Activated CD8-positive, alpha-beta memory T cell treated with anti-CD3 and anti-CD28 coated beads, Interleukin-2, amount 10 ng/mL, durations not matched to agents 7 days and 5 days (primary cell): ENCODE measurements at regions of chr20 and their contacts with region 1.

Region 1: GRCh38 chr20:38748097-38748860 is at the start of gene ACTR5:
- DNase-seq: peak; percentile 97
- ATAC-seq: peak; percentile 91
- H3K4me3 Mint-ChIP-seq: peak within 1 kb of the TSS; percentile 91
- H3K27ac Mint-ChIP-seq: peak within 1 kb of the TSS; percentile 93
- H3K4me1 Mint-ChIP-seq: peaks cover 26% of the 10 kb centered on the region
- H3K27me3 Mint-ChIP-seq: peaks cover 7% of the 10 kb centered on the region
- total RNA-seq, gene ACTR5: 9.5 to 10.6 TPM

Region 2: GRCh38 chr20:38633577-38634093 is 114.6 kb before region 1 on chr20:
- CTCF ChIA-PET with region 1: interaction called, 15 read pairs
- DNase-seq: peak; percentile 68
- ATAC-seq: peak; percentile 89
- H3K4me3 Mint-ChIP-seq: no peak overlapping the region
- H3K27ac Mint-ChIP-seq: no peak overlapping the region
- H3K4me1 Mint-ChIP-seq: peaks cover 3% of the 10 kb centered on the region
- H3K27me3 Mint-ChIP-seq: peaks cover 13% of the 10 kb centered on the region

Region 3: DNA sequence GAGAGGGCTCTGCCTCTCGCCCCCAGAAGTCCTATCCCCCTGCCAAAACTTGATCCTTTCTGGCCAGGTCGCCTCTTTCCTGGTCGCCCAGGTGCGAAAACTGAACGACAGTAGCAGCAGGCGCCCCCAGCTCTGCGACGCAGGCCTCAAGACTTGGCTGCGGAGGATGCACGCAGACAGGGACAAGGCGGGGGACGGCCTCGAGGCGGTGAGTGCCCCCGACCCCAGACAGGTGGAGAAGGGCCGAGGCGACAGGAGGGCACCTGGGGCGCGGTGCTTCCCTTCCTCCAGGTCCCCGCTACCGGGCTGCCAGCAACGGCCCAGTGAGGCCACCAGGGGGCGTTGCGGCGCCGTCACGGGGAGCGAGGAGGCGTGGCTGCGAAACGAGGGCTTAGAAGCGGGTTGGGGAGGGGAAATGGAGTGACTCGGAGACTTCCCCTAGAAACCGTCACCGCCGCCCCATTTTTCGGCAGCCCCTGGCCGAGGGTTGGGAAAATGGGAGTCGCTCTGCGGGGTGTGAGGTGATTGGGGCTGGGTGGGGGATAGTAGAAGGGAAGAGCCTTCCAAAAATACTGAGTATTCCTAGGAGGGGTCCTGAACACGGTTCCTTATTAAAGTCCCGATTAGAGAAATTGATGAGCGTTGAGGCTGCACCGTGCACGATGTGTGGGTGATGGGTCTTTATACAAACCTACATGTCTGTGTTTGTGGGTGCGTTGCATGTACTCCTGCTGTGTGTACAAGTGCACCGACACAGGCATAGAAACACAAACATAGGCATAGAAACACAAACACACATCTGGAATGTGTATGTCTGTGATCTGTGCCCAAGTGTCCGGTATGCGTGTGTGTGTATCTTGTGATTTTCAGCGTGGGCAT is 102.1 kb before region 1 on chr20:
- CTCF ChIA-PET with region 1: interaction called, 54 read pairs
- DNase-seq: peak; percentile 90
- ATAC-seq: peak; percentile 98
- H3K4me3 Mint-ChIP-seq: peak overlapping the region; percentile 61
- H3K27ac Mint-ChIP-seq: peak overlapping the region; percentile 17
- H3K4me1 Mint-ChIP-seq: peaks cover 9% of the 10 kb centered on the region
- H3K27me3 Mint-ChIP-seq: peaks cover 37% of the 10 kb centered on the region

Region 4: GRCh38 chr20:38725931-38726803 is 22.1 kb before region 1 on chr20:
- CTCF ChIA-PET with region 1: interaction called, 18 read pairs
- DNase-seq: peak; percentile 65
- ATAC-seq: peak; percentile 33
- H3K4me3 Mint-ChIP-seq: peak overlapping the region; percentile 40
- H3K27ac Mint-ChIP-seq: peak overlapping the region; percentile 4
- H3K4me1 Mint-ChIP-seq: peaks cover 46% of the 10 kb centered on the region
- H3K27me3 Mint-ChIP-seq: peaks cover 93% of the 10 kb centered on the region